Heart left ventricle (tissue), 16 donors: ENCODE measurements at regions of chr5 and their contacts with region 1.

Region 1: GRCh38 chr5:53262348-53262970 is 152.9 kb upstream of the MOCS2 start:
- DNase-seq: no peak
- ATAC-seq: no peak
- H3K4me3 ChIP-seq: no peak overlapping the region
- H3K27ac ChIP-seq: no peak overlapping the region
- H3K4me1 ChIP-seq: peaks cover 0 to under 1% (median 0%) of the 10 kb centered on the region in 12 donors
- H3K27me3 ChIP-seq: no peaks in the 10 kb centered on the region
- CTCF ChIP-seq: peak in 7 of 12 donors; percentile 18 to 54 (median 47)
- POLR2A ChIP-seq: no peak

Region 2: DNA sequence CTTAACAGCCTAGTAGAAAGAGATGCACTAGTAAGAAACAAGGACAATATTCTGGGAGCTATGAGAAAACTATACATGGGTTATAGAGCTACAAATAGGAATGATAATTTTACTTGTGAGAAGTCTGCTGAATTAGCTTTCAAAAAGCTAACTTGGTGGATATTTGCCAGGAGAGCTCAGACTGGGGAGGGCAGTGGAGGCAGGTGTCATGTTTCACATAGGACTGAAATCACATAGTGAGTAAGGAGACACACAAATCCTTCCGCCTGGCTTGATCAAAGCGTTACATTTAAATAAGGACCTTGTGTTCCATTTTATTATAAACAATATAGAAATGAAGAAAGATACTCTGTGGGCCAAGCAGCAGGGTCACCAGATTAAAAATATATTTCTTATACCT is 1644.2 kb before region 1 on chr5:
- intact Hi-C with region 1: no loop called
- DNase-seq: no peak
- ATAC-seq: no peak
- H3K4me3 ChIP-seq: no peak overlapping the region
- H3K27ac ChIP-seq: no peak overlapping the region
- H3K4me1 ChIP-seq: no peaks in the 10 kb centered on the region
- H3K27me3 ChIP-seq: no peaks in the 10 kb centered on the region
- CTCF ChIP-seq: no peak
- POLR2A ChIP-seq: no peak

Region 3: GRCh38 chr5:53425598-53426511 is 163.4 kb after region 1 on chr5:
- intact Hi-C with region 1: loop called in 1 of 10 experiments (anchors 10 kb)
- DNase-seq: no peak
- ATAC-seq: no peak
- H3K4me3 ChIP-seq: no peak overlapping the region
- H3K27ac ChIP-seq: no peak overlapping the region
- H3K4me1 ChIP-seq: peaks cover 0 to 11% (median 0%) of the 10 kb centered on the region in 12 donors
- H3K27me3 ChIP-seq: no peaks in the 10 kb centered on the region
- CTCF ChIP-seq: peak in 5 of 12 donors; percentile 14 to 28 (median 17)
- POLR2A ChIP-seq: no peak